Activated CD8-positive, alpha-beta T cell treated with anti-CD3 and anti-CD28 coated beads for 36 hours (primary cell): ENCODE measurements at regions of chr7 and their contacts with region 1.

Region 1: DNA sequence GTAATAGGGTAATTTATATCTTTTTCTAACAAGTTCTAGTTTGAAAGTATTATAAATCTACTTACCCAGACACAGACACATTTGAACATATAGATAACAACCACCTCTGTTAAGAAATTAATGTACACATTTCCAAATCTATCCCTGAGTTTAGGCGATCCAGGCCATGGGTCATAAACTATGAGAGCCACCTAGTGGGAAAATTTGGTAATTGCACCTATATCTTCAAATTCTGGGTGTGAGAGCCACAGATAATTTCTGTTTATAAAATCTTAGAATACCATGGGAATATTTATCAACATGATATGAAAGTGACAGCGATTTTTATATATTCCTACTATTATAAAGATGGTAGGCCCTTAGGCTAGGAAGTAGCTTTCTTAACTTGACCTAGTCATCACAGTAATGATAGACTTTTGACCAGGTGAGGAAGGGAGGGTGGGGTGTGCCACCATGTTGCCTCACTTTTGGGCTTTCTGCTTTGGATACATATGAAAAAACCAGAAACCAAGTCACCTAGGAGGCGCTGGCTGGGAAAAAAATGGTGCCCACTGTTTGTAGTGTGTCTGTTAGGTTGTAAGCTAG is 8.0 kb upstream of the EPHA1 start:
- DNase-seq: no peak
- ATAC-seq: peak; percentile 60
- H3K4me3 Mint-ChIP-seq: no peak overlapping the region
- H3K27ac Mint-ChIP-seq: no peak overlapping the region
- H3K4me1 Mint-ChIP-seq: peaks cover 10% of the 10 kb centered on the region
- H3K27me3 Mint-ChIP-seq: no peaks in the 10 kb centered on the region
- CTCF ChIP-seq: peak; percentile 87

Region 2: GRCh38 chr7:142866361-142867058 is 550.1 kb before region 1 on chr7:
- CTCF ChIA-PET with region 1: no interaction called
- POLR2A ChIA-PET with region 1: no interaction called
- intact Hi-C with region 1: no loop called
- DNase-seq: peak; percentile 20
- ATAC-seq: peak; percentile 39
- H3K4me3 Mint-ChIP-seq: no peak overlapping the region
- H3K27ac Mint-ChIP-seq: no peak overlapping the region
- H3K4me1 Mint-ChIP-seq: no peaks in the 10 kb centered on the region
- H3K27me3 Mint-ChIP-seq: no peaks in the 10 kb centered on the region
- CTCF ChIP-seq: peak; percentile 49

Region 3: DNA sequence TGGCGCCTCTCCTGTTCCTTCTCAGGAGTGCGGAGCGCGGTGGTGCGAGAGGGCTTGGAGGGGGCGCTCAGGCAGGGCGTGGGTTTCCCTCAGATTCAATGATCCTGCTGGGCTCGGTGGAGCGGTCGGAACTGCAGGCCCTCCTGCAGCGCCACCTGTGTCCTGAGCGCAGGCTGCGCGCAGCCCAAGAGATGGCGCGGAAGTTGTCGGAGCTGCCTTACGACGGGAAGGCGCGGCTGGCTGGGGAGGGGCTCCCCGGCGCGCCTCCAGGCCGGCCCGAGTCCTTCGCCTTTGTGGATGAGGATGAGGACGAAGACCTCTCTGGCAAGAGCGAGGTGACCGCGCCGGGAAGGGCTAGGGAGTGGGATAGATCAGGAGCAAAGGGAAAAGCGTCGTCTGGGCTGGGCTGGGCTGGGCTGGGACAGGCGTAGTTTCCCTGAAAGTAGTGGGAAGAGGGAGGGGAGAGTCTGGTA is 71.2 kb before region 1 on chr7:
- CTCF ChIA-PET with region 1: interaction called, 19 read pairs
- POLR2A ChIA-PET with region 1: no interaction called
- intact Hi-C with region 1: no loop called
- DNase-seq: peak; percentile 82
- ATAC-seq: peak; percentile 100
- H3K4me3 Mint-ChIP-seq: peak overlapping the region; percentile 65
- H3K27ac Mint-ChIP-seq: no peak overlapping the region
- H3K4me1 Mint-ChIP-seq: peaks cover 7% of the 10 kb centered on the region
- H3K27me3 Mint-ChIP-seq: no peaks in the 10 kb centered on the region
- CTCF ChIP-seq: peak; percentile 67

Region 4: GRCh38 chr7:143372070-143372469 is 44.6 kb before region 1 on chr7:
- CTCF ChIA-PET with region 1: interaction called, 3 read pairs
- POLR2A ChIA-PET with region 1: no interaction called
- intact Hi-C with region 1: loop called (anchors 5 kb)
- DNase-seq: peak; percentile 82
- ATAC-seq: peak; percentile 60
- H3K4me3 Mint-ChIP-seq: no peak overlapping the region
- H3K27ac Mint-ChIP-seq: peak overlapping the region; percentile 79
- H3K4me1 Mint-ChIP-seq: peaks cover 55% of the 10 kb centered on the region
- H3K27me3 Mint-ChIP-seq: no peaks in the 10 kb centered on the region
- CTCF ChIP-seq: no peak

Region 5: GRCh38 chr7:143380255-143380645 is 36.4 kb before region 1 on chr7:
- CTCF ChIA-PET with region 1: interaction called, 15 read pairs
- POLR2A ChIA-PET with region 1: no interaction called
- intact Hi-C with region 1: loop called (anchors 5 kb)
- DNase-seq: peak; percentile 94
- ATAC-seq: peak; percentile 45
- H3K4me3 Mint-ChIP-seq: peak overlapping the region; percentile 85
- H3K27ac Mint-ChIP-seq: peak overlapping the region; percentile 88
- H3K4me1 Mint-ChIP-seq: peaks cover 36% of the 10 kb centered on the region
- H3K27me3 Mint-ChIP-seq: no peaks in the 10 kb centered on the region
- CTCF ChIP-seq: peak; percentile 90

Region 6: GRCh38 chr7:143385891-143386781 is 30.5 kb before region 1 on chr7:
- CTCF ChIA-PET with region 1: interaction called, 14 read pairs
- POLR2A ChIA-PET with region 1: no interaction called
- intact Hi-C with region 1: no loop called
- DNase-seq: peak; percentile 40
- ATAC-seq: peak; percentile 21
- H3K4me3 Mint-ChIP-seq: no peak overlapping the region
- H3K27ac Mint-ChIP-seq: no peak overlapping the region
- H3K4me1 Mint-ChIP-seq: peaks cover 11% of the 10 kb centered on the region
- H3K27me3 Mint-ChIP-seq: no peaks in the 10 kb centered on the region
- CTCF ChIP-seq: no peak